ENCODE measurements at regions of chr1 and their contacts with region 1.

Region 1: DNA sequence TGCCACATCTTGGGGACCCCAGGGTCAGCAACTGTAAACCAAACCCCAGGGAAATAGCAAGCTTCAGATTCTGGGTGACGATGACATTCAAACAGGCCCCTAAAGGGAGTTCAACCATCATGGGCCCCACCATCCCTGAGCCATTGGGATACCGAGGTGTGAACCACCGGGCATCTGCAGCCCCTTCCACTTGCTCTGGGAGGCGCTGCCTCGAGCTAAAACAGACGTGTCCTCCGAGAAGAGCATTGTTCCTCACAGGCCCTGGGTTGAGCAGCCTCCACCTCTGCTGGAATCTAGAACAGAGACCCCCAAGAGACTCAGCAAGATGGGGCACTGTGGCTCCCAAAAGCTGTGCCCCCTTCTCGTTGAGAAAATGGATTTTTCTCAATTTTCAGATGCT is 19.0 kb upstream of the EFHD2 start:
- DNase-seq: no peak
- H3K4me3 ChIP-seq: no peak overlapping the region
- H3K27ac ChIP-seq: no peak overlapping the region
- H3K4me1 ChIP-seq: no peaks in the 10 kb centered on the region
- H3K27me3 ChIP-seq: no peaks in the 10 kb centered on the region
- CTCF ChIP-seq: no peak

Region 2: DNA sequence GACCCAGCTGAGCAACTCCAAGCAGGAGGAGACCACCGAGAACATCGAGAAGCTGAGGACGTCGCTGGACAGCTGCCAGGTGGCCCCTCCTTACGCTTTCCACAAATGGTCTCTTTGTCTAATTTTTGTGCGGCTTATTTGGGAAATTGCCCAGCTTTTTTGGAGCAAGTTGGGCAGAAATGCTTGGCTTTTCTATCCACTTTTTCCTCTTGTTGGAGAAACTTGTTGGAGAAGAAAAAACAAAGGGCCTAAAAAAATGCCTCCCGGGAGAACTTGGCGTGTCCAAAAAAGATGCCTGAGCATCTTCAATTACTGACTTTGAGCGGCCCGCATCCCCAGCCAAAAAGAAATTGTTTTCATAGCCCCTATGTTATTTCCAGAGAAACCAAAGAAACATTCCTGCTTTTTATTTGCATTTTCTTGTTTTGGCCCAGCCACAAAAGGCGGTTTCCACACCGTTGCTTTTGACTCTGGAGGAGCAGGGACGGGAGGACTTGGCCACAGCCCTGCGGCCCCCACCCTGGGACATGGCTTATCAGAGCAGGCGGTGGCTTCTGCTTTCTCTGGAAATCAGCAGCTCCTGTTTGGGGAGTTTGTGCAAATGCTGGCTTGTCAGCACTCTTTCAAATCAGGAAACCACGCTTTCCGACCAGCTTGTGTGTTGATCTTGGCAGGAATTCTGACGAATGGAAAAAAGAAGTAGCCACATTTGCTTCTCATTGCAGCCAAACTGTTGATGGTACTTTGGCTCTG is 62.1 kb before region 1 on chr1:
- CTCF ChIA-PET with region 1: no interaction called
- dilution Hi-C with region 1: loop called (anchors 5 kb)
- in situ Hi-C with region 1: no loop called
- intact Hi-C with region 1: no loop called
- DNase-seq: no peak
- H3K4me3 ChIP-seq: no peak overlapping the region
- H3K27ac ChIP-seq: no peak overlapping the region
- H3K4me1 ChIP-seq: peaks cover 8% of the 10 kb centered on the region
- H3K27me3 ChIP-seq: no peaks in the 10 kb centered on the region
- CTCF ChIP-seq: no peak

Region 3: GRCh38 chr1:15417365-15417934 is 26.8 kb after region 1 on chr1:
- CTCF ChIA-PET with region 1: no interaction called
- dilution Hi-C with region 1: no loop called
- in situ Hi-C with region 1: no loop called
- intact Hi-C with region 1: no loop called
- DNase-seq: peak; percentile 62
- H3K4me3 ChIP-seq: no peak overlapping the region
- H3K27ac ChIP-seq: peak overlapping the region; percentile 48
- H3K4me1 ChIP-seq: peaks cover 37% of the 10 kb centered on the region
- H3K27me3 ChIP-seq: no peaks in the 10 kb centered on the region
- CTCF ChIP-seq: no peak

Region 4: DNA sequence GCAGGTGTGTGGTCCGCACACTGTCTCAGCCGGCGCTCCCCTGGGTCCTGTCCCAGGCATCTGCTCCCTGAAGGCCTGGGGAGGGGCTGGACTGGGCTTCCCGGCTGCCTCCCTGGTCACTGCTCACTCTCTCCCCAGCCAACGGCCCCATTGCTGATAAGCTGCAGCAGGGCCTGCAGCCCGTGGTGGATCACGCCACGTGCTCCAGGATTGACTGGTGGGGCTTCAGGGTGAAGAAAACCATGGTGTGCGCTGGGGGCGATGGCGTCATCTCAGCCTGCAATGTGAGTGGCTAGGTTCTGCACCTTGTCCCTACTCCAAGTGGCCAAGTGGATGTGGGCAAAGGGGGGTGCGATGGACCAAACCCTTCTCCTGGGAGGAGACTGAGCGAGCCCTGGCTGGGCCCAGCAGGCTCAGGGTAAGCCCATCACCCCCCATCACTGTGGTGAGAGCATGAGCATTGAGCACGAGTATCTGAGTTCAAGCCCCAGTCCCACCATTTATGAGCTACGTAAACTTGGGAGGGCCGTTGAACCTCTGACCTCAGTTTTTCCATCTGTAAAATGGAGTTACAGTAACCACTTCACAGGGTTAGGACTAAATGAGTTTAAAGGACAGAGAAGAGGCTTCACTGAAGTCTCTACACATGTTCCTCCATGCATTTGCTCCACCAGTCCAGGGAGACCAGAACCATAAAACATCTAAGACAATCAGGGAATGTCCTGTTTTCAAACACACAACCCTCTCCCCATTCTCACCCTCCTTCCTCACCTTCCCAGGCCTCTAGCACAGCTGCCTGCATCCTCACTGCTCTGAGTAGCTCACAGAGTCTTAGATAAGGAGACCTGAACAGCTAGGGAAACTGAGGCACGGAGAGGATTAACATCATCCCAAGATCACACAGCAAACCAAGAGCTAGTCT is 54.1 kb after region 1 on chr1:
- CTCF ChIA-PET with region 1: no interaction called
- dilution Hi-C with region 1: loop called (anchors 10 kb)
- in situ Hi-C with region 1: no loop called
- intact Hi-C with region 1: no loop called
- DNase-seq: no peak
- H3K4me3 ChIP-seq: no peak overlapping the region
- H3K27ac ChIP-seq: no peak overlapping the region
- H3K4me1 ChIP-seq: no peaks in the 10 kb centered on the region
- H3K27me3 ChIP-seq: no peaks in the 10 kb centered on the region
- CTCF ChIP-seq: no peak

Region 5: GRCh38 chr1:15459771-15460719 is 69.4 kb after region 1 on chr1:
- CTCF ChIA-PET with region 1: no interaction called
- dilution Hi-C with region 1: no loop called
- in situ Hi-C with region 1: no loop called
- intact Hi-C with region 1: no loop called
- DNase-seq: no peak
- H3K4me3 ChIP-seq: no peak overlapping the region
- H3K27ac ChIP-seq: no peak overlapping the region
- H3K4me1 ChIP-seq: no peaks in the 10 kb centered on the region
- H3K27me3 ChIP-seq: no peaks in the 10 kb centered on the region
- CTCF ChIP-seq: no peak

Region 6: DNA sequence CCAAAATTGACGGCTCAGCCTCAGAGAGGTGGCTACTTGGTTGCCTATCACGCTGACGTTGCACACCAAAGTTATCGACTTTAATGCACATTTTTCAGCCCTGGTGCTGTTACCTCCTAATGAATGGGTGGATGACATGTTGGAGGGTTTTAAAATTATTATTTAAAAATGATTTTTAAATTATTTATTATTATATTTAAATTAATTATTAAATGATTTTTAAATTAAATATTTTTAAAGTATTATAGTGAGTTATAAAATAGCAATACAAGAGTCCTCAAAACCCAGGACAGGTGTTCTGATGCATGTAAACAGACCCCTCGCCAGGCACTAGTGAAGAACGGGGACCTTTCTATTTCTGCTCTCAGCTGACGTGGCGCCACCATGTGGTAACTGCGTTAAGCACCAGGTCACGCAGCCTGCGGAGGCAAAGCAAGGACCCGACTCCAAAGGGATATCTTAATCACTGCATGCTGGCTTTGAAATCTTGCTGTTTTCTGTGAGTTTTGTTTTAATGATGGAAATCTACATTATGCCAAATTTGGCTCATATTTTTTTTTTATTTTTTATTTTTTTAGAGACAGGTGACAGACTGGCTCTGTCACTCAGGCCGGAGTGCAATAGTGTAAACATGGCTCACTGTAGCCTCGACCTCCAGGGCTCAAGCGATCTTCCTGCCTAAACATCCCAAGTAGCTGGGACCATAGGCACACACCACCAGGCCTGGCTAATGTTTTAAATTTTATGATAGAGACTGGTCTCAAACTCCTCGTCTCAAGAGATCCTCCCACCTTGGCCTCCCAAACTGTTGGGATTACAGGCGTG is 110.8 kb after region 1 on chr1:
- CTCF ChIA-PET with region 1: no interaction called
- dilution Hi-C with region 1: loop called (anchors 5 kb)
- in situ Hi-C with region 1: no loop called
- intact Hi-C with region 1: no loop called
- DNase-seq: peak; percentile 12
- H3K4me3 ChIP-seq: no peak overlapping the region
- H3K27ac ChIP-seq: no peak overlapping the region
- H3K4me1 ChIP-seq: no peaks in the 10 kb centered on the region
- H3K27me3 ChIP-seq: no peaks in the 10 kb centered on the region
- CTCF ChIP-seq: peak; percentile 76 to 85